Mammary epithelial cell (primary cell): ENCODE measurements at regions of chrX and their contacts with region 1.

Region 1: GRCh38 chrX:132022967-132023895 is at the start of gene STK26:
- DNase-seq: peak; percentile 76
- H3K4me3 ChIP-seq: peak within 1 kb of the TSS; percentile 66 to 86 (median 71)
- H3K27ac ChIP-seq: peak within 1 kb of the TSS; percentile 55
- H3K4me1 ChIP-seq: no peaks in the 10 kb centered on the region
- H3K27me3 ChIP-seq: no peaks in the 10 kb centered on the region
- CTCF ChIP-seq: no peak
- total RNA-seq, gene STK26: 45.3 to 72.7 TPM

Region 2: DNA sequence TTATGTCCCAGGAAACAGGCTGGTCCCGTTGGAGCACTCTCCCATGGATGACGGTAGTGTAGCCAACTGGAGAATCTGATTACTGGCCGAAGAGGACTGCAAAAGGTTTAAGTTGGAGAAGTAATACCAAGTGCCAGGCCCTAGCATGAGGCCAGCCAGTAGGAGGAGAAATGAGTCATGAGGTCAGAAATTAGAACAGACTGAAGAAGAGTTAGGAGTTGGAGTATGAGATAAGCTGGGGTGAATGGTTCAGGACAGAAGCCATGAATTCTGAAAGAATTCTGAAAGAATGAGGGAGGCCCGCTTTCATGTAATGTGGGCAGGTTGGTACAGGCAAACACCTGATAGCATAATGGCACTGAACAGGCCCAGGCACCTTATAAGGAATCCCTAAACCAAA is 18.5 kb before region 1 on chrX:
- CTCF ChIA-PET with region 1: no interaction called
- dilution Hi-C with region 1: no loop called
- in situ Hi-C with region 1: no loop called
- intact Hi-C with region 1: loop called (anchors 2 kb)
- DNase-seq: peak; percentile 67
- H3K4me3 ChIP-seq: no peak overlapping the region
- H3K27ac ChIP-seq: no peak overlapping the region
- H3K4me1 ChIP-seq: peaks cover 21% of the 10 kb centered on the region
- H3K27me3 ChIP-seq: no peaks in the 10 kb centered on the region
- CTCF ChIP-seq: peak in 1 of 2 donors; percentile 23

Region 3: DNA sequence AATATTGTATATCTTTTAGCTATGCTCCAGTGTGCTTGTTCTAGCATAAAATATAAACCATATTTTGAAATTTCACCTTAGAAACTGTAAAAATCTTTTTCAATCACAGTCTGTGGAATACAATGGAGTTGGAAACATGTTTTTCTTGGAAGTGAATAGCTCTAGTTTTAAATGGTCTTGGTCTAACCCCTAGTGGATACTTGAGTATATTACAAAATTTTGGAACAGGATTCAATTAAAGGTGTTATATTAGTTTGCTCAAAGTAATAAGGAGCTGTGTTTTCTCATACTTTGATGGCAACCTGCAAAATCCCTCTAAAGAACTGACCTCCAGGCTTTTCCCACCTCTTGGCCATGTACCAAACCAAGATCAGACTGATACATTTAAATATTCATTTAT is 48.0 kb after region 1 on chrX:
- CTCF ChIA-PET with region 1: no interaction called
- dilution Hi-C with region 1: no loop called
- in situ Hi-C with region 1: no loop called
- intact Hi-C with region 1: loop called (anchors 1 kb)
- DNase-seq: peak; percentile 7
- H3K4me3 ChIP-seq: no peak overlapping the region
- H3K27ac ChIP-seq: no peak overlapping the region
- H3K4me1 ChIP-seq: no peaks in the 10 kb centered on the region
- H3K27me3 ChIP-seq: no peaks in the 10 kb centered on the region
- CTCF ChIP-seq: peak; percentile 22 to 43